H1 (cell line): ENCODE measurements at regions of chr2 and their contacts with region 1.

Region 1: DNA sequence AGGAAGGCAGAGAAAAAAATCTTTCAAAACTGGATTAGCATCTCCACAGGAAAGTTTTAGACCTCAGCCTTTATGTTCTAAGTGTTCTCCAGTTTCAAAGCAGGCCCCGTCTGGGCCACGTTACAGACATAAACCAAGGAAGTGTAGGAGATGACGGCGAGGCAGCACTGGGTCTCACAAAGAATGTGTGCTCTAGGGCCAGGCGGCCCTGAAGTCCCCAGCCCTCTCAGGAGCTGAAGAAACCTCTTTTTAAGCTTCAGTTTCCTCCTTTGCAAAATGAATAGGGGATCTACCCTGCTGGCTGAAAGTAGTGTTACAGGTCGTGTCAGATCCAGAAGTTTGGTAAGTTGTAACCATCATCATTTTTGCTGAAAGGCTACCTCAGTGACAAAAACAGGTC is 81.7 kb downstream of the SPRED2 start:
- DNase-seq: no peak
- H3K4me3 ChIP-seq: no peak overlapping the region; a peak in 1 of 8 replicates
- H3K27ac ChIP-seq: no peak overlapping the region
- H3K4me1 ChIP-seq: peaks cover 4 to 16% (median 6%) of the 10 kb centered on the region in 4 experiments; a peak in 5 of 7 replicates
- H3K27me3 ChIP-seq: no peaks in the 10 kb centered on the region
- CTCF ChIP-seq: peak in 1 of 3 experiments; percentile 58; a peak in 1 of 4 replicates
- EP300 ChIP-seq: no peak
- POLR2A ChIP-seq: no peak
- RAD21 ChIP-seq: peak in 1 of 2 experiments; percentile 41; a peak in 2 of 4 replicates

Region 2: GRCh38 chr2:64978514-64979268 is 372.0 kb before region 1 on chr2:
- CTCF ChIA-PET with region 1: no interaction called
- POLR2A ChIA-PET with region 1: no interaction called
- DNase-seq: no peak
- H3K4me3 ChIP-seq: no peak overlapping the region
- H3K27ac ChIP-seq: no peak overlapping the region
- H3K4me1 ChIP-seq: no peaks in the 10 kb centered on the region; a peak in 2 of 7 replicates
- H3K27me3 ChIP-seq: no peaks in the 10 kb centered on the region
- CTCF ChIP-seq: peak in 1 of 3 experiments; percentile 29; a peak in 1 of 4 replicates
- EP300 ChIP-seq: no peak
- POLR2A ChIP-seq: no peak
- RAD21 ChIP-seq: peak; percentile 17 to 35; a peak in 3 of 4 replicates

Region 3: DNA sequence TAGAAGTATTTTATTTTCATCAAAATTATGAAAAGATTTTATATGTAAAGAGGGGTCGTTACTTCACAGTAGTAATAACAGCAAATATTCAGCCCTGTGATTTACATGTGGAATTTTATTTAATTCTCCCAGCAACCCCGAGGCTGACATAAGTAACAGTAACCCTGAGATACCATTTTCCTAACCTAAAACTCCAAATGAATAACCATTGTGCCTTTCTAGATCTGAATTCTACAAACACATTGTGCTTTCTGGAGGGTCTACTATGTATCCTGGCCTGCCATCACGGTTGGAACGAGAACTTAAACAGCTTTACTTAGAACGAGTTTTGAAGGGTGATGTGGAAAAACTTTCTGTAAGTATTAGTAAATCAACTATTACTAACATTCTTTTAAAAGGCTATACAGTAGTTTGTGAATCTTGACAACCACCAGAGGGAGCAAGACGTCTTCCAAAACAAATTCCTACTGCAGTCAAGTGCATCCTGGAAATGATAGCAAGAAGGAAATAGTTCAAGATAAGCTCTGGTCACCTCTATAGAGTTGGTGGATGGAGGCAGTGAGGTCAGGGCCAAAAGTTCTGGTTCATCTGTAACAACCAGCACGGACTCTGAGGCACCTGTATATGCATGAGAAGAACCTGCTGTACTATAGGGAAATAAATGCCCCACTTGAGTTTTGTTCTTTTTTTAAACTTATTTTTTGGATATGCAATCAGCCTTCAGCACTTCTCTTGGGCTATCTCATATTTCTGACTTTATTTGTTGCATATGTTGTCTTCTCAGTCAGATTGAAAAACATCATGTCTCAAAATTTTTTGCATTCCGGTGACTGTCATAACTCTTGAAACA is 85.6 kb before region 1 on chr2:
- CTCF ChIA-PET with region 1: interaction called, 20 read pairs
- POLR2A ChIA-PET with region 1: no interaction called
- DNase-seq: no peak
- H3K4me3 ChIP-seq: no peak overlapping the region
- H3K27ac ChIP-seq: no peak overlapping the region
- H3K4me1 ChIP-seq: peaks cover 0 to 4% (median 2%) of the 10 kb centered on the region in 4 experiments; a peak in 1 of 7 replicates
- H3K27me3 ChIP-seq: no peaks in the 10 kb centered on the region; a peak in 1 of 7 replicates
- CTCF ChIP-seq: peak in 2 of 3 experiments; percentile 47 to 66; a peak in 2 of 4 replicates
- EP300 ChIP-seq: no peak
- POLR2A ChIP-seq: no peak
- RAD21 ChIP-seq: peak; percentile 87 to 89

Region 4: DNA sequence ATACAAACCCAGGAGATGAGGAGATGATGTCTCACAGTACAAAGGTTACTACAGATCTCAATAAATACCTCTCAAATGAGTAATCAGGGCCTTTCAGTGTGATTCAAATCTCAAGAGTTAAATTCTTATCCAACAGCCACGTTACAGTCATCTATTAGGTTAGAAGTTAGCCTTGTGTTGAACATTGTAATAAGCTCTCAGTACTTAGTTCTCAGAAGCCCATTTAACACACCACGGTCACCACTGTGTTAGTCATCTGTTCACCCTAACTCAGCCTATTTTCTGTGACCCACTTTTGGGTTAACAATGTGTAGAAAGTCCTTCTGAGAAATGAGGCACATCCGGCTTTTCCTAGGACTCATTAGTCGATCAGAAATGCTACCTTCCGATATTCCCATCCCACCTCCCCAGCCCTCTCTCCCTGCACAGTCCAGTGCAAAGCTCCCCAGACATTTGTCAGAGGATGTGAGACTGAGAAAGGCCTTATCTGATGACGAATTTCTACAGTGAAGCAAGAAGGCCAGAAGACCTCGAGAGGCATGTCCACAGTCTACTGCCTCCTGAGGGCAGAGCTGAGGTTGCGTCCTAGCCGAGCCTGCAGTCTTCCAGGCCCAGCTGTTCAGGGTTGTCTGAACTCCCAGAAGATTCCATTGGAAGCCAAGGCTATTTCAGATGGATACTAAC is 30.5 kb before region 1 on chr2:
- CTCF ChIA-PET with region 1: interaction called, 14 read pairs
- POLR2A ChIA-PET with region 1: no interaction called
- DNase-seq: no peak
- H3K4me3 ChIP-seq: no peak overlapping the region
- H3K27ac ChIP-seq: no peak overlapping the region
- H3K4me1 ChIP-seq: no peaks in the 10 kb centered on the region
- H3K27me3 ChIP-seq: no peaks in the 10 kb centered on the region
- CTCF ChIP-seq: peak; percentile 36 to 69 (median 69)
- EP300 ChIP-seq: no peak
- POLR2A ChIP-seq: no peak
- RAD21 ChIP-seq: peak; percentile 16 to 43; a peak in 3 of 4 replicates

Region 5: DNA sequence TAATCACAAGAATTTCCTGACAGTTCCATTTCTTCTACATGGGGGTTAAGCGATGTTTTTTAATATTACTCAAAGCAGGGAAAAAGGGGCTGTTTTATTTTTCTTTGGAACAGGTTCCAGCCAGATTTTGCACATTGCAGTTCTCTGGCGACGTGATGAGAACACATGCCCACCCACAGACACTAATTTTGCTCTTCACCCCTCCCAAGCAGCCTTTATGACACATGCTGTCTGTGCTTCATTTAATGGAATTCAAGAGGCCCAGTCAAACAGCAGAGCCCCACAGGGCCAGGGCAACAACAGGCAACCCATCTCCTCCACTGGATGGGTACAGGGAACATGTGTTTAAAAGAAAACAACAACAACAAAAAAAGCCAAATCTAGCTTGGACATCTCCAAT is 10.9 kb after region 1 on chr2:
- CTCF ChIA-PET with region 1: interaction called, 22 read pairs
- POLR2A ChIA-PET with region 1: no interaction called
- DNase-seq: no peak
- H3K4me3 ChIP-seq: no peak overlapping the region
- H3K27ac ChIP-seq: no peak overlapping the region
- H3K4me1 ChIP-seq: peaks cover 0 to 7% (median 0%) of the 10 kb centered on the region in 4 experiments; a peak in 2 of 7 replicates
- H3K27me3 ChIP-seq: no peaks in the 10 kb centered on the region
- CTCF ChIP-seq: no peak
- EP300 ChIP-seq: no peak
- POLR2A ChIP-seq: no peak
- RAD21 ChIP-seq: no peak

Region 6: DNA sequence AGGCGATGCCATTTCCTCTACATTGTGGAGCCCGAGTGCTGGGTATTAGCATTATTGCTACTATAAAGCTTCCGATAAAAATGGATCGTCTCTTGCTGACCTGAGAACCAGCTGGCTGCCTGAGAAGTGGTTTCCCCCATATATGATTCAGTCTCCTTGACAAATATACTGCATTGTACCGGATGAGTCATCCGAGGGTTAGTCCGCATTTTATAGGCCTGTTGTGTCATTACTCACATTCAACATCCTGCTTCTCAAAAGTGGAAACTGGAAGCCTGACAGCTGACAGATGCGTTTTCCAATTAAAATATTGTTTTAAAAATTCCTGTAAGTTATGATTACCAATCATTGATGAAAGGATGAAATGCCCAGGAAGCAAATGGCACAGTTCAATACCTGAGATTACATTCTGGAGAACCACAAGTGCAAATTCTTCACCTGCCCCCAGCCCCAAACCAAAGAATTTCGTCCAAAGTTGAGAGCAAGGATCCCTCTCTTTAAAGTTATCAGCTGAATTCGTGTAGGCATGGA is 16.0 kb after region 1 on chr2:
- CTCF ChIA-PET with region 1: interaction called, 42 read pairs
- POLR2A ChIA-PET with region 1: no interaction called
- DNase-seq: no peak
- H3K4me3 ChIP-seq: no peak overlapping the region
- H3K27ac ChIP-seq: no peak overlapping the region
- H3K4me1 ChIP-seq: peaks cover 0 to 9% (median 2%) of the 10 kb centered on the region in 4 experiments; a peak in 4 of 7 replicates
- H3K27me3 ChIP-seq: no peaks in the 10 kb centered on the region
- CTCF ChIP-seq: no peak
- EP300 ChIP-seq: no peak
- POLR2A ChIP-seq: no peak
- RAD21 ChIP-seq: no peak